ENCODE measurements at regions of chr5 and their contacts with region 1.

Region 1: GRCh38 chr5:42889311-42889933 is 77.7 kb upstream of the SELENOP start:
- DNase-seq: peak; percentile 85
- ATAC-seq: peak; percentile 90
- H3K4me3 Mint-ChIP-seq: no peak overlapping the region
- H3K27ac Mint-ChIP-seq: no peak overlapping the region
- H3K4me1 Mint-ChIP-seq: no peaks in the 10 kb centered on the region
- H3K27me3 Mint-ChIP-seq: peaks cover 6% of the 10 kb centered on the region
- CTCF ChIP-seq: peak; percentile 79

Region 2: GRCh38 chr5:42879291-42879690 is 10.1 kb before region 1 on chr5:
- CTCF ChIA-PET with region 1: interaction called, 30 read pairs
- POLR2A ChIA-PET with region 1: no interaction called
- intact Hi-C with region 1: no loop called
- DNase-seq: no peak
- ATAC-seq: no peak
- H3K4me3 Mint-ChIP-seq: no peak overlapping the region
- H3K27ac Mint-ChIP-seq: no peak overlapping the region
- H3K4me1 Mint-ChIP-seq: peaks cover 4% of the 10 kb centered on the region
- H3K27me3 Mint-ChIP-seq: no peaks in the 10 kb centered on the region
- CTCF ChIP-seq: no peak

Region 3: DNA sequence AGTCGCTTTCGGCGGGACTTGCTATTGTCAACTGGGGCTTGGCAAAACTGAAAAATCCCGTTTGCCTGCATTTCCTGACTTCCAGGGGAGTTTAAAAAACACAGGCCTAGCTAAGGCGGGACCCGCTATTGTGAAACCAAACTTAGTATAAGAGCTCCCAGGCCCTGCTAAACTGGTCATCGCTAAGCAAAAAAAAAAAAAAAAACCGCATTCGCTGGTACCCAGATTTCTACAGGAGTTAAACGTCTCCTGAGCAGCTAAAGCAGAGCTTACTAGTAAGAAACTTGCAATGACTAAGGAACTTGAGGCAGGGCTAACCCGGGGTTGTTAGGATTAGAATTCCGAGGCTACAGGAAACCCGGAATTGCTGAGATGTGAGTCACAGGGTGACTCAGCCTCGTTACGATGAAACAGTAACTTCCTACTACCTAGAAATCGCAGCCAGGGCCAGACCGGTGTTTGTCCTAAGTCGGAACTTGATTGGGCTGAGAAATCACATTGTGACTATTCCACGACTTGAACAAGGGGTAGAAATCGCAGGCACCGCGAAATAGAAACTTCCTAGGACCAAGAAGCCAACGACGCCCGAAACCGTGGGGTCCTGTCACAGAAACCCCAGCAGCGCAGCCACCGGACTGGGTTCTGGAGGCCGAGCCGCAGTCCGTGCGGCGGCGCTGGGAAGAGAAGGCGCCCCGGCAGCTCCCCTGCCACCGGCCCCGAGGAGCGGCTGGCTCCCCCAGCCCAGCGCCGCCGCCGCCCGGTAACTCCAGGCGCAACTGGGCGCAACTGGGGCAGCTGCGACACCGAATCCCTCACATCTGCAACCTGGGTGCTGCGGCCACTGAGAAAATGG is 61.2 kb after region 1 on chr5:
- CTCF ChIA-PET with region 1: no interaction called
- POLR2A ChIA-PET with region 1: no interaction called
- intact Hi-C with region 1: no loop called
- DNase-seq: peak; percentile 82
- ATAC-seq: peak; percentile 46
- H3K4me3 Mint-ChIP-seq: peak overlapping the region; percentile 89
- H3K27ac Mint-ChIP-seq: peak overlapping the region; percentile 97
- H3K4me1 Mint-ChIP-seq: peaks cover 19% of the 10 kb centered on the region
- H3K27me3 Mint-ChIP-seq: no peaks in the 10 kb centered on the region
- CTCF ChIP-seq: no peak